PC-9 (cell line): ENCODE measurements at regions of chr6 and their contacts with region 1.

Region 1: DNA sequence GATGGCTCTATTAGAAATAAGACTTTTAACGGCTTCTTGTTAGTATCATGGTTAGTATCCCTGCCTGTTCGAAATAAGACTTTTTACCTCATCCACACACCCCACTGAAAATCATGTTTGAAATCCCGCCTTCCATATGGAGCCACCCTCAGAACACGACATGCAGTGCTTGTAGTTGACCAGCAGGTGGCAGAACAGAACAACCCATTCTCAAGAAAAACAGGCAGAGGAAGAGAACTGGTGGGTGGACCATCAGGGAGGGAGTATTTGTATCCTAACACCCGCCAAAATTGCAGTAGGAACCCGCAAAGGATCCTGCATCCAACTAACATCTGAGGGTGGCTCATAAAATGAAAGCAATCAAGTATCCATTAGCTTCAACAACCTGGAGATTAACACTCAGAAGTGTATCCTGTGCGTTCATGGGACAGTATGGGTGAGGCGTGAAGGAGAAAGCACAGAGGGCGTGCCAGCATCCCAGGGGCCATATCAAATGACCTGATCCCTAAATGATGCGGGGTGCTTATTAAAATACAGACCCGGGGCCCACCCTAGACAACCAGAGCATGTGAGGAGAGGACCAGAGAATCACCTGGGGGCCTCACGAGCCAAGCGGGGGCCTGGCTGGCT is 89.6 kb upstream of the NHSL1 start:
- DNase-seq: peak; percentile 30 to 65
- H3K4me3 ChIP-seq: no peak overlapping the region
- H3K27ac ChIP-seq: no peak overlapping the region
- H3K4me1 ChIP-seq: peaks cover 20% of the 10 kb centered on the region
- H3K27me3 ChIP-seq: no peaks in the 10 kb centered on the region
- CTCF ChIP-seq: peak; percentile 100

Region 2: GRCh38 chr6:138428944-138429598 is 159.8 kb before region 1 on chr6:
- CTCF ChIA-PET with region 1: no interaction called
- POLR2A ChIA-PET with region 1: no interaction called
- intact Hi-C with region 1: loop called (anchors 1 kb)
- DNase-seq: peak in 1 of 2 experiments; percentile 55
- H3K4me3 ChIP-seq: no peak overlapping the region
- H3K27ac ChIP-seq: no peak overlapping the region
- H3K4me1 ChIP-seq: no peaks in the 10 kb centered on the region
- H3K27me3 ChIP-seq: no peaks in the 10 kb centered on the region
- CTCF ChIP-seq: peak; percentile 89

Region 3: GRCh38 chr6:138572167-138572865 is 16.6 kb before region 1 on chr6:
- CTCF ChIA-PET with region 1: no interaction called
- POLR2A ChIA-PET with region 1: no interaction called
- intact Hi-C with region 1: no loop called
- DNase-seq: no peak
- H3K4me3 ChIP-seq: no peak overlapping the region
- H3K27ac ChIP-seq: no peak overlapping the region
- H3K4me1 ChIP-seq: no peaks in the 10 kb centered on the region
- H3K27me3 ChIP-seq: no peaks in the 10 kb centered on the region
- CTCF ChIP-seq: no peak

Region 4: GRCh38 chr6:138631566-138631965 is 42.6 kb after region 1 on chr6:
- CTCF ChIA-PET with region 1: no interaction called
- POLR2A ChIA-PET with region 1: no interaction called
- intact Hi-C with region 1: no loop called
- DNase-seq: no peak
- H3K4me3 ChIP-seq: no peak overlapping the region
- H3K27ac ChIP-seq: no peak overlapping the region
- H3K4me1 ChIP-seq: no peaks in the 10 kb centered on the region
- H3K27me3 ChIP-seq: no peaks in the 10 kb centered on the region
- CTCF ChIP-seq: no peak

Region 5: GRCh38 chr6:138691595-138692057 is 102.7 kb after region 1 on chr6:
- CTCF ChIA-PET with region 1: interaction called, 3 read pairs
- POLR2A ChIA-PET with region 1: no interaction called
- intact Hi-C with region 1: loop called (anchors 1 kb)
- DNase-seq: peak; percentile 23 to 77
- H3K4me3 ChIP-seq: peak overlapping the region; percentile 63
- H3K27ac ChIP-seq: peak overlapping the region; percentile 87
- H3K4me1 ChIP-seq: peaks cover 28% of the 10 kb centered on the region
- H3K27me3 ChIP-seq: no peaks in the 10 kb centered on the region
- CTCF ChIP-seq: no peak

Region 6: DNA sequence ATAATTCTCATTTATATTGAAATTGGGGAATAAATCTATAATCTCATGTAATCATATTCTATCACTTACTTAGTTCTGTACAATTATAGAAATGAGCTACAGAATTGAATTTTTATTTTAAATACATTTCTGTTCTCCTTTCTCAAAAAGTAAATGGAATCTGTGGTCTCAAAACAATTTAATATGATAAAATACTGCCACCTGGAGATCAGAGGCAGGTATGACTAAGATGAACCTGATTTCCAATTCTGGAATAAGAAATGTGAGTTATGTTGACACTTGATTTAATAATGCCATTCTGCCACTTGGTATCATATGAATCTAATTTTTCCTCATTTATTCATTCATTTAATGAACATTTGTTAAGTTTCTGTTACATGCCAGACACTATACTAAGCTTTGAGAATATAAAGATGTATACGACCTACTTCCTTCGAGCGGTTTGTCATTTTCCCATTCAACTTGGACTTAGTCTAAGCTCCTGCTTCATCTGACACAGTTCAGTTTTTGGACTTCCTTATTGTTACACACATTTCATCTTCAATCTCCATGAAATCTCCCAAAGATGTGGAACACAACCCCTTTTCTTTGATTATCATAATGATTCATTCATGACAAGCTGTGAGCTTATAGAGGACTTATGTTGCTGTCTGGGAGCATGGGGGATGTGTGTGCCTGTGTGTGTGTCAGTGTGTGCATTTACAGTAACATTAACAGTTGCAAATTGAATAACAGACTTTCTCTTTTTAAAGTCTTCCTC is 177.2 kb after region 1 on chr6:
- CTCF ChIA-PET with region 1: no interaction called
- POLR2A ChIA-PET with region 1: no interaction called
- intact Hi-C with region 1: loop called (anchors 1 kb)
- DNase-seq: peak in 1 of 2 experiments; percentile 60
- H3K4me3 ChIP-seq: no peak overlapping the region
- H3K27ac ChIP-seq: no peak overlapping the region
- H3K4me1 ChIP-seq: no peaks in the 10 kb centered on the region
- H3K27me3 ChIP-seq: no peaks in the 10 kb centered on the region
- CTCF ChIP-seq: peak; percentile 95